CD4-positive, alpha-beta T cell (primary cell): ENCODE measurements at regions of chr3 and their contacts with region 1.

Region 1: GRCh38 chr3:143119009-143119914 is at the start of gene CHST2:
- DNase-seq: peak; percentile 40 to 86 (median 65)
- ATAC-seq: peak; percentile 73
- H3K4me3 ChIP-seq: peak within 1 kb of the TSS; percentile 93
- H3K4me3 Mint-ChIP-seq: peak within 1 kb of the TSS; percentile 95
- H3K27ac ChIP-seq: peak within 1 kb of the TSS; percentile 15 to 35
- H3K27ac Mint-ChIP-seq: peak within 1 kb of the TSS; percentile 88
- H3K4me1 ChIP-seq: peaks cover 36% of the 10 kb centered on the region
- H3K4me1 Mint-ChIP-seq: peaks cover 44% of the 10 kb centered on the region
- H3K27me3 ChIP-seq: peaks cover 0 to 3% of the 10 kb centered on the region in 2 experiments
- H3K27me3 Mint-ChIP-seq: no peaks in the 10 kb centered on the region
- CTCF ChIP-seq: no peak
- total RNA-seq, gene CHST2: 2.0 TPM

Region 2: DNA sequence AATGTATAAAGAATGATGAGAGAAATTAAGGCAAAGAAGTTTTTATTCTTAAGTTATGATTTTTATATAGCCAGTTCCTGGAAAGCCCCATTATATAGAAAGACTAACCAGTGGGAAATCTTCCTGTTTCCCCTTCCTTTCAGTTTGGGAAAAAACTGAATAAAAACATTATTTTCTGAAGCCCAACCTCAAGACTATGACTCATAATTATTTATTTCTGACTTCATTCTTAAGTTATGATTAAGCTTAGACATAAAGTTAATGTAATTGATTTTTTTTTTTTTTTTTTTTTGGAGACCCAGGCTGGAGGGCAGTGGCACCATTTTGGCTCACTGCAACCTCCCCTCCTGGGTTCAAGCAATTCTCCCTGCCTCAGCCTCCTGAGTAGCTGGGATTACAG is 339.7 kb before region 1 on chr3:
- CTCF ChIA-PET with region 1: no interaction called
- POLR2A ChIA-PET with region 1: no interaction called
- intact Hi-C with region 1: no loop called
- DNase-seq: no peak
- ATAC-seq: no peak
- H3K4me3 ChIP-seq: no peak overlapping the region
- H3K4me3 Mint-ChIP-seq: no peak overlapping the region
- H3K27ac ChIP-seq: no peak overlapping the region
- H3K27ac Mint-ChIP-seq: no peak overlapping the region
- H3K4me1 ChIP-seq: no peaks in the 10 kb centered on the region
- H3K4me1 Mint-ChIP-seq: no peaks in the 10 kb centered on the region
- H3K27me3 ChIP-seq: no peaks in the 10 kb centered on the region
- H3K27me3 Mint-ChIP-seq: no peaks in the 10 kb centered on the region
- CTCF ChIP-seq: no peak

Region 3: GRCh38 chr3:143001369-143002082 is 117.7 kb before region 1 on chr3 and contains the start of gene U2SURP:
- CTCF ChIA-PET with region 1: no interaction called
- POLR2A ChIA-PET with region 1: interaction called, 10 read pairs
- intact Hi-C with region 1: loop called in 1 of 2 experiments (anchors 5 kb)
- DNase-seq: peak; percentile 83 to 96 (median 86)
- ATAC-seq: peak; percentile 93
- H3K4me3 ChIP-seq: peak within 1 kb of the TSS; percentile 89
- H3K4me3 Mint-ChIP-seq: peak within 1 kb of the TSS; percentile 97
- H3K27ac ChIP-seq: peak within 1 kb of the TSS; percentile 93 to 94
- H3K27ac Mint-ChIP-seq: peak within 1 kb of the TSS; percentile 97
- H3K4me1 ChIP-seq: peaks cover 23% of the 10 kb centered on the region
- H3K4me1 Mint-ChIP-seq: peaks cover 55% of the 10 kb centered on the region
- H3K27me3 ChIP-seq: peaks cover 0 to 4% of the 10 kb centered on the region in 2 experiments
- H3K27me3 Mint-ChIP-seq: peaks cover 14% of the 10 kb centered on the region
- CTCF ChIP-seq: no peak
- total RNA-seq, gene U2SURP: 164 to 179 TPM

Region 4: GRCh38 chr3:143216709-143217182 is 97.5 kb after region 1 on chr3:
- CTCF ChIA-PET with region 1: no interaction called
- POLR2A ChIA-PET with region 1: interaction called, 3 read pairs
- intact Hi-C with region 1: loop called in 1 of 2 experiments (anchors 2 kb)
- DNase-seq: peak in 1 of 14 experiments; percentile 11
- ATAC-seq: peak; percentile 91
- H3K4me3 ChIP-seq: no peak overlapping the region
- H3K4me3 Mint-ChIP-seq: peak overlapping the region; percentile 78
- H3K27ac ChIP-seq: no peak overlapping the region
- H3K27ac Mint-ChIP-seq: peak overlapping the region; percentile 73
- H3K4me1 ChIP-seq: no peaks in the 10 kb centered on the region
- H3K4me1 Mint-ChIP-seq: peaks cover 23% of the 10 kb centered on the region
- H3K27me3 ChIP-seq: no peaks in the 10 kb centered on the region
- H3K27me3 Mint-ChIP-seq: no peaks in the 10 kb centered on the region
- CTCF ChIP-seq: no peak

Region 5: GRCh38 chr3:143644370-143645089 is 525.3 kb after region 1 on chr3:
- CTCF ChIA-PET with region 1: no interaction called
- POLR2A ChIA-PET with region 1: no interaction called
- intact Hi-C with region 1: loop called (anchors 1 to 10 kb)
- DNase-seq: peak in 3 of 14 experiments; percentile 28 to 33 (median 30)
- ATAC-seq: no peak
- H3K4me3 ChIP-seq: no peak overlapping the region
- H3K4me3 Mint-ChIP-seq: no peak overlapping the region
- H3K27ac ChIP-seq: no peak overlapping the region
- H3K27ac Mint-ChIP-seq: no peak overlapping the region
- H3K4me1 ChIP-seq: no peaks in the 10 kb centered on the region
- H3K4me1 Mint-ChIP-seq: no peaks in the 10 kb centered on the region
- H3K27me3 ChIP-seq: no peaks in the 10 kb centered on the region
- H3K27me3 Mint-ChIP-seq: no peaks in the 10 kb centered on the region
- CTCF ChIP-seq: no peak

Region 6: DNA sequence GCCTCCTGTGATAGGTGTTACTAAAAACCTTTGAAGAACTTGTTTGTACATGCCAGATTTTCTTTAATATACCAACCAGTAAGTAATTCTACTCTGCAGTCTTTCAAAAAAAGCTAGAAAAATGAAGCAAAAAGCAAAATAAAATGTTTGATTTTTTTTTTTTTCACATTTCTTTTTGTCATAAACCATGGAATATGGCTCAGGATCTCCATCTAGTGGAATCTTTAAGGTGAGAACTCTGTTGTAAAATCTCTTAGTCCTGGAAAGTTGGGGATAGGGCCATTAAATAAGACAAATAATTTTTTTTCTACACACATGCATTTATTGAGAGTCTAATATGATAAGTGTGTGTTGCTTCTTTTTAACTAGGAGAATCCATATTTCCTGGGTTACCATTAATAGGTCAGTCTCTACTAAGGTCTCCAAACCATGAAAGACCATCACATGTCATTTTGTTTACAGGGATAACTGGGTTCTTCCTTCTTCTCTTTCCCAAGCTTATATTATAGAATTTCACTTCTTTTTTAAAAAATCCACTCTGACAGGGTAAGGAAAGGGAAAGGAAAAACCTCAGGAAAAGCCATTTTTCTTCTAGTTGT is 644.4 kb after region 1 on chr3:
- CTCF ChIA-PET with region 1: no interaction called
- POLR2A ChIA-PET with region 1: no interaction called
- intact Hi-C with region 1: loop called (anchors 2 to 10 kb)
- DNase-seq: peak in 3 of 14 experiments; percentile 21 to 42 (median 27)
- ATAC-seq: no peak
- H3K4me3 ChIP-seq: no peak overlapping the region
- H3K4me3 Mint-ChIP-seq: peak overlapping the region; percentile 28
- H3K27ac ChIP-seq: no peak overlapping the region
- H3K27ac Mint-ChIP-seq: peak overlapping the region; percentile 14
- H3K4me1 ChIP-seq: peaks cover 3% of the 10 kb centered on the region
- H3K4me1 Mint-ChIP-seq: peaks cover 36% of the 10 kb centered on the region
- H3K27me3 ChIP-seq: no peaks in the 10 kb centered on the region
- H3K27me3 Mint-ChIP-seq: no peaks in the 10 kb centered on the region
- CTCF ChIP-seq: peak; percentile 44